ENCODE measurements at regions of chr16 and their contacts with region 1.

Region 1: GRCh38 chr16:81526935-81527334 is 82.3 kb downstream of the CMIP start:
- DNase-seq: peak; percentile 64 to 84 (median 72)
- ATAC-seq: peak; percentile 77
- H3K4me3 ChIP-seq: no peak overlapping the region
- H3K27ac ChIP-seq: peak overlapping the region; percentile 54
- H3K4me1 ChIP-seq: peaks cover 38 to 42% of the 10 kb centered on the region in 2 experiments
- H3K27me3 ChIP-seq: no peaks in the 10 kb centered on the region
- CTCF ChIP-seq: no peak
- EP300 ChIP-seq: no peak
- POLR2A ChIP-seq: no peak
- RAD21 ChIP-seq: no peak

Region 2: DNA sequence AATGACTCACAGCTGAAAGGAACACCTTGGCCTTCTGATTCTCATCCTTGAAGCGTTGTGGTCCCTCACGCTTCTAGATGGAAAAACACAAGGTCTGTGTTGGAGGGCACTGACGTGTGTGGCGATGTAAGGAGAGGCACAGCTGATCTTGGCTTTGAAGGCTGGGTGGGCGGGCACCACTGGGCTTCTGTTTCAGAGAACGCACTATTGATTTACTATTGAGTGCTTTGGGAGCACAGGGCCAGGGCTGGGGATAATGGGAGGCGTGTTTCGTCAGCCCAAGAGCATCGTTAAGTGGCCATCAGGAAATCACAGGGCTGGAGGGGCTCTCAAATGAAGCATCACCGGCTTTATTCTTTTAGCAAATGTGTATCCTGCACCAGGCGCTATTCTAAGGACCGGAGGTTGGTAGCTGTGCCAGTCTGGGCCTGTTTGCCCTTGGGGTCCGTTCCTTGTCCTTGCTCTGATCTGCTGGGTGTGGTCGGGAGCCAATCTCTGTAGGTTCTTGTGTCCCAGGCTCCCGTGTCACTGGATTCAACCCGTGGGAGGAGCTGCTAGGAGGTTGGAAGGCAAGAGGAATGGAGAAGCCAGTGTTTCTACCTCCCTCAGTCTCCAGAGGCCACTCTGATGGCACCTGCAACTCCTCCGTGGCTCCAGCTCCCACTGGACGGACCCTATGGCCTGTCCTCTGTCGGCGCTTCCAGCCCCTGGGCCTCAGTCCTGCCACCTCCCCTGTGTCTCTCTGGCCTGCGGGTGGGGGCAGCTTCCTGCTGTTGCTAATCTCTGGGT is 11.5 kb before region 1 on chr16:
- CTCF ChIA-PET with region 1: no interaction called
- POLR2A ChIA-PET with region 1: interaction called, 15 read pairs
- in situ Hi-C with region 1: no loop called
- intact Hi-C with region 1: no loop called
- DNase-seq: no peak
- ATAC-seq: no peak
- H3K4me3 ChIP-seq: no peak overlapping the region
- H3K27ac ChIP-seq: no peak overlapping the region
- H3K4me1 ChIP-seq: peaks cover 18 to 26% of the 10 kb centered on the region in 2 experiments; a peak in 4 of 5 replicates
- H3K27me3 ChIP-seq: no peaks in the 10 kb centered on the region
- CTCF ChIP-seq: no peak
- EP300 ChIP-seq: no peak
- POLR2A ChIP-seq: no peak
- RAD21 ChIP-seq: no peak

Region 3: GRCh38 chr16:81537721-81538561 is 11.0 kb after region 1 on chr16:
- CTCF ChIA-PET with region 1: no interaction called
- POLR2A ChIA-PET with region 1: interaction called, 16 read pairs
- in situ Hi-C with region 1: no loop called
- intact Hi-C with region 1: no loop called
- DNase-seq: peak in 1 of 4 experiments; percentile 47
- ATAC-seq: peak; percentile 75
- H3K4me3 ChIP-seq: no peak overlapping the region
- H3K27ac ChIP-seq: no peak overlapping the region
- H3K4me1 ChIP-seq: peaks cover 0 to 15% of the 10 kb centered on the region in 2 experiments; a peak in 3 of 5 replicates
- H3K27me3 ChIP-seq: no peaks in the 10 kb centered on the region
- CTCF ChIP-seq: peak; percentile 16 to 49 (median 44); a peak in 3 of 6 replicates
- EP300 ChIP-seq: no peak
- POLR2A ChIP-seq: no peak
- RAD21 ChIP-seq: peak; percentile 26 to 49; a peak in 3 of 4 replicates

Region 4: DNA sequence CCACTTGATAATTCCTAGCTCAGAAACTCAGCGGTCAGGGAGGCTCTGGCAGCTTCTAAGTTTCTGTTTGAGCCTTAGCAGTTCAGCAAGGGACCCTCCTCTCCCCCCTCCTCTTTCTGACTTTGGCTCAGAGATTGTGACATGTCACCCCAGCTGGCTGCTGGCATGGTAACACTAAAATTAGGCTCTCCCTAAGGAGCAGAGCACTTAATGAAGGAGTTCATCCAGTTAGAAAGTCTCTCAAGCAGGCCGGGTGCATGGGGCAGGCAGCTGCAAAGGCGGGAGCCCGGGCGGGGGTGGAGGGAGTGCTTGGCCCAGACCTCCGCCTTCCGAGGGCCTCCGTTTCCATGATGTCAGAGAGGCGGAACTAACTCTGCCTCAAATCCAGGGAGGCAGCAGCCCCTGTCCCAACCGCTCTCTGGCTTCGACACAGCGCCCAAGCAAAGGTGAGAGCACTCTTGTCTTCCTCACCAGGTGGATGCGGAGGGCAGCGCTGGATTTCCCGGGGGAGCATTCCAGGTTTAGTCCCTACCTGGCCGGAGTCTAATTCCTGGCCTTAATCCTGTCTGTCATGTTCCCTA is 124.1 kb after region 1 on chr16:
- CTCF ChIA-PET with region 1: no interaction called
- POLR2A ChIA-PET with region 1: no interaction called
- in situ Hi-C with region 1: no loop called
- intact Hi-C with region 1: no loop called
- DNase-seq: peak; percentile 66 to 74 (median 68)
- ATAC-seq: peak; percentile 72
- H3K4me3 ChIP-seq: no peak overlapping the region
- H3K27ac ChIP-seq: peak overlapping the region; percentile 63; the same call in 2 of the 3 replicates
- H3K4me1 ChIP-seq: peaks cover 40 to 42% of the 10 kb centered on the region in 2 experiments
- H3K27me3 ChIP-seq: no peaks in the 10 kb centered on the region
- CTCF ChIP-seq: no peak
- EP300 ChIP-seq: peak; percentile 11; the same call in 1 of the 2 replicates
- POLR2A ChIP-seq: no peak
- RAD21 ChIP-seq: no peak

Measured in K562 (cell line).